A673 (cell line): ENCODE measurements at regions of chr4 and their contacts with region 1.

Region 1: GRCh38 chr4:77075869-77076799 is at the start of gene CCNI:
- DNase-seq: peak; percentile 91
- H3K4me3 ChIP-seq: peak within 1 kb of the TSS; percentile 86
- H3K27ac ChIP-seq: peak within 1 kb of the TSS; percentile 99
- H3K4me1 ChIP-seq: peaks cover 11% of the 10 kb centered on the region
- H3K27me3 ChIP-seq: no peaks in the 10 kb centered on the region
- CTCF ChIP-seq: no peak
- total RNA-seq, gene CCNI: 133 and 134 TPM in 2 replicates

Region 2: GRCh38 chr4:76896731-76897535 is 179.2 kb before region 1 on chr4:
- CTCF ChIA-PET with region 1: no interaction called
- POLR2A ChIA-PET with region 1: no interaction called
- intact Hi-C with region 1: no loop called
- DNase-seq: peak; percentile 6
- H3K4me3 ChIP-seq: peak overlapping the region; percentile 43
- H3K27ac ChIP-seq: no peak overlapping the region
- H3K4me1 ChIP-seq: no peaks in the 10 kb centered on the region
- H3K27me3 ChIP-seq: peaks cover 29% of the 10 kb centered on the region
- CTCF ChIP-seq: no peak

Region 3: DNA sequence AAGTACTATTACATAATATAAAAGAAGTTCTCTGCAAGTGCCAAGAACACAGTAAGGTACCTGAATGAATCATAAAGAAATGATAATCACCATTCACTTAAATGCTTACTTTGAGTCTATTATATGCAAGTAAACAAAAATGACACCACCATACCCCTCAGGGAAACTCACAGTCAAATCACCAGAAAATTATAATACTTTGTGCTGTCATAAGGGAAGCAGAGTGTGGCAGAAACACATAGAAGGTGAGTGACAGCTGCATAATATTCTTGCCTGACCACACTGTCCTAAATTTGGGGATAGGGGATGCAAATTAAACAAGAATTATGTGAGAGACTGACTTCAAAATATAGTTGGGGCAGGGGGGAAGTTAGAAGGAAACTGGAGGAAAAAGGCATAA is 13.3 kb before region 1 on chr4:
- CTCF ChIA-PET with region 1: no interaction called
- POLR2A ChIA-PET with region 1: interaction called, 22 read pairs
- intact Hi-C with region 1: no loop called
- DNase-seq: no peak
- H3K4me3 ChIP-seq: no peak overlapping the region
- H3K27ac ChIP-seq: no peak overlapping the region
- H3K4me1 ChIP-seq: no peaks in the 10 kb centered on the region
- H3K27me3 ChIP-seq: no peaks in the 10 kb centered on the region
- CTCF ChIP-seq: no peak

Region 4: DNA sequence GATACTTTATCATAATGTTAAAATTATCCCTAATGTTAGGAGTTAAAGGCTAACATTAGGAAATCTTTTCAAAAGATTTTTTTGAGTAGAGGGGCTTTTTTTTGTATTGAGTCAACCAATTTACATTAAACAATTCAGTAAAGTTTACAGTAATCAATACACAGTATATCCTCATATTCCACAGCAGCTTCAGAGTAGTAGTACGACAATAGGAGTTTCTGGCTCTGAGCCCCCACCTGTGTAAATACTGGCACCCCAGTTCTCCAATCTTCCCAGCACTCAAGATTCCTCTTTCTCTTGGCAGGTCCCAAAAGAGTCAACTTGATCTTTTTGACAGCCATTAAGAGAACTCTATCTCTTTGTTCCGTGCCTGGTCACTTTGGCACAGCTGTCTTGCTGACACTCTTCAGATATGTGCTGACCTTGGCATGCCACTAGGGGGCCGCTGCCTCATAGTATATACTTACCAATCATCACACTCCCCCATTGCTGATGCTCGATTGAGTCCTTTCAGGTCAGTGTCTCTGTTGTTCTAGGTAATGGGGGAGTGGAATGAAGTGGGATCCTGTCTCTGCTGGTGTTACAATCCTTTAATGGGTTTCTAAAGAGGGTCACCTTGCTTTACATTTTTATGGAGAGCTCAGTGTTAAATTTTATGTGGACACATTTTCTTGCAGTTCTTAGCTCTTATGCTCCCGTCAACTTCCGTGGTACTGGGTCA is 19.1 kb after region 1 on chr4:
- CTCF ChIA-PET with region 1: interaction called, 13 read pairs
- POLR2A ChIA-PET with region 1: no interaction called
- intact Hi-C with region 1: no loop called
- DNase-seq: peak; percentile 53
- H3K4me3 ChIP-seq: no peak overlapping the region
- H3K27ac ChIP-seq: no peak overlapping the region
- H3K4me1 ChIP-seq: no peaks in the 10 kb centered on the region
- H3K27me3 ChIP-seq: no peaks in the 10 kb centered on the region
- CTCF ChIP-seq: peak; percentile 72

Region 5: DNA sequence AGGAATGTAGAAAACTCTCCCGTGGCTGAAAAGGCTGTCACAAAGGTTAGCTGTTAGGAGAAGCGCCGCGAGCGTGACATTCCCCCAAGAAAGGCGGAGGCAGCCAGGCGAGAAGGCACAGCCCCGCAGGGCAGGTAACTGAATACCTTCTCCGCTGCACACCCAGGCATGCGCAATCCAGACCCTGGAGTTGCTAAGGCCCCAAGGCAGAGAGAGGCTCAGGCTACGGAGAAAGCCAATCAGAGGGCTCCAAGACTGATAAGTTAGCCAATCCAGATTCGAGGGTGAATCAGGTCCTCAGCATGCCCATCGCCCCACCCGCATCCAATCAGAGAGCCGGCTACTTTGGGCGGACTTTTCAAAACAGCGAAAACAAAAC is 80.4 kb after region 1 on chr4:
- CTCF ChIA-PET with region 1: no interaction called
- POLR2A ChIA-PET with region 1: no interaction called
- intact Hi-C with region 1: loop called (anchors 5 kb)
- DNase-seq: peak; percentile 95
- H3K4me3 ChIP-seq: peak overlapping the region; percentile 81
- H3K27ac ChIP-seq: peak overlapping the region; percentile 95
- H3K4me1 ChIP-seq: no peaks in the 10 kb centered on the region
- H3K27me3 ChIP-seq: no peaks in the 10 kb centered on the region
- CTCF ChIP-seq: no peak